ENCODE measurements at regions of chr11 and their contacts with region 1.

Region 1: DNA sequence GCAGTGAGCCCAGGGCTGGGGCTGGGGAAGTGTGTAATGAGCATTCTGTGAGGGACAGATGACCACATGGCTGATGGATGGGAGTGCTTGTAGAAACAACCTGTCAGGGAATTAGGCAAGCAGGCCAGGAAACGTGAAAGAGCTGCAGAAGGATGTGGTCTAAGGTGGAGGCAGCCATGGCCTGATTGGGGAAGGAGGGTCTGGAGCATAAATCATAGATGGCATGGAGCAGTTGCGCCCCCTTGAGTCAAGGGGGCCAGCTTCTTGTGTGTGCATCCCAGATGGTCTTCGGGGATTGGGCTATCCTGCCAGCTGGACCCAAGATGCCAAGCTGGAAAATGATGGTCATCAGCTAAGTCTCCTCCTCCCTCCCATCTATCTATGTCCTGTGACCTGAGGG is 119.4 kb upstream of the CLPB start:
- DNase-seq: peak; percentile 58
- ATAC-seq: peak; percentile 57
- H3K4me3 Mint-ChIP-seq: no peak overlapping the region
- H3K27ac Mint-ChIP-seq: no peak overlapping the region
- H3K4me1 Mint-ChIP-seq: peaks cover 10% of the 10 kb centered on the region
- H3K27me3 Mint-ChIP-seq: peaks cover 15% of the 10 kb centered on the region

Region 2: GRCh38 chr11:72391638-72392423 is 161.9 kb before region 1 on chr11:
- CTCF ChIA-PET with region 1: no interaction called
- POLR2A ChIA-PET with region 1: no interaction called
- DNase-seq: no peak
- ATAC-seq: no peak
- H3K4me3 Mint-ChIP-seq: no peak overlapping the region
- H3K27ac Mint-ChIP-seq: no peak overlapping the region
- H3K4me1 Mint-ChIP-seq: no peaks in the 10 kb centered on the region
- H3K27me3 Mint-ChIP-seq: no peaks in the 10 kb centered on the region

Region 3: GRCh38 chr11:72483412-72484186 is 70.1 kb before region 1 on chr11:
- CTCF ChIA-PET with region 1: interaction called, 17 read pairs
- POLR2A ChIA-PET with region 1: no interaction called
- DNase-seq: peak; percentile 26
- ATAC-seq: peak; percentile 43
- H3K4me3 Mint-ChIP-seq: no peak overlapping the region
- H3K27ac Mint-ChIP-seq: peak overlapping the region; percentile 10
- H3K4me1 Mint-ChIP-seq: peaks cover 20% of the 10 kb centered on the region
- H3K27me3 Mint-ChIP-seq: peaks cover 11% of the 10 kb centered on the region

Region 4: DNA sequence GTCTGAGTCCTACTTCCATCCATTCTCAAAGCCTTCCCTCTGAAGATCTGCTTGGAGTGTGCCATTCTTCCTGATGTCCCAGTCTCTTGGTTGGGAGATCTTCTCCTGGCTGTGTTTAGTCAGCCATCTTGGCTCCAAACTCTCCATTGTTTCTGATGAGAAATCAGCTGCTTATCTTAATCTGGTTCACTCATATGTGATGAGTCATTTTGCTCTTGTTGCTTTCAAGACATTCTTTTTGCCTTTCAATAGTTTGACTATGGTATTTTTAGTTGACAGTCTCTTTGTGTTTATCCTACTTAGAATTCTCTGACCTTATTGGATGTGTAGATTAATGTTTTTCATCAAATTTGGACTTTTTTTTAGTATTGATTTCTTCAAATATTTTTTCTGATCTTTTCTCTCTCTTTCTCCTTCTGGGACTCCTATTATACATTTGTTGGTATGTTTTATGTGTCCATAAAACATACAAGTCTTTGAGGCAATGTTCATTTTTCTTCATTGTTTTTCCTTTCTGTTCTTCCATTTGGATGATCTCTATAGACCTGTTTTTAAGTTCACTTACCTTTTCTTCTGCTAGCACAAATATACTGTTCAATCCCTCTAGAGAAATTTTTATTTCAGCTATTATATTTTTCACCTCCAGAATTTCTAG is 42.2 kb before region 1 on chr11:
- CTCF ChIA-PET with region 1: no interaction called
- POLR2A ChIA-PET with region 1: no interaction called
- DNase-seq: no peak
- ATAC-seq: no peak
- H3K4me3 Mint-ChIP-seq: no peak overlapping the region
- H3K27ac Mint-ChIP-seq: no peak overlapping the region
- H3K4me1 Mint-ChIP-seq: no peaks in the 10 kb centered on the region
- H3K27me3 Mint-ChIP-seq: peaks cover 17% of the 10 kb centered on the region

Measured in activated CD8-positive, alpha-beta T cell treated with anti-CD3 and anti-CD28 coated beads, Interleukin-2, amount 10 ng/mL, durations not matched to agents 7 days and 5 days (primary cell).